ENCODE measurements at regions of chr2 and their contacts with region 1.

Region 1: GRCh38 chr2:16756831-16757644 is 91.4 kb upstream of the CYRIA start:
- DNase-seq: peak; percentile 37
- ATAC-seq: peak; percentile 96
- H3K4me3 ChIP-seq: no peak overlapping the region
- H3K27ac ChIP-seq: no peak overlapping the region
- H3K4me1 ChIP-seq: no peaks in the 10 kb centered on the region
- H3K27me3 ChIP-seq: peaks cover 17% of the 10 kb centered on the region
- CTCF ChIP-seq: peak; percentile 70 to 95 (median 84)
- POLR2A ChIP-seq: no peak
- RAD21 ChIP-seq: peak; percentile 92

Region 2: GRCh38 chr2:16553226-16553625 is 203.8 kb before region 1 on chr2:
- CTCF ChIA-PET with region 1: interaction called, 5 read pairs
- POLR2A ChIA-PET with region 1: no interaction called
- RAD21 ChIA-PET with region 1: no interaction called
- intact Hi-C with region 1: loop called (anchors 1 kb)
- DNase-seq: peak; percentile 32
- ATAC-seq: peak; percentile 60
- H3K4me3 ChIP-seq: no peak overlapping the region
- H3K27ac ChIP-seq: no peak overlapping the region
- H3K4me1 ChIP-seq: no peaks in the 10 kb centered on the region
- H3K27me3 ChIP-seq: peaks cover 5% of the 10 kb centered on the region; the same call in 1 of the 2 replicates
- CTCF ChIP-seq: peak; percentile 52 to 71 (median 66); a peak in 5 of 6 replicates
- POLR2A ChIP-seq: no peak
- RAD21 ChIP-seq: peak; percentile 43; the same call in 1 of the 2 replicates

Region 3: GRCh38 chr2:16617282-16618261 is 139.5 kb before region 1 on chr2:
- CTCF ChIA-PET with region 1: interaction called, 85 read pairs
- POLR2A ChIA-PET with region 1: interaction called, 3 read pairs
- RAD21 ChIA-PET with region 1: interaction called, 5 to 12 read pairs
- intact Hi-C with region 1: loop called (anchors 1 kb)
- DNase-seq: no peak
- ATAC-seq: peak; percentile 61; the same call in 1 of the 2 replicates
- H3K4me3 ChIP-seq: no peak overlapping the region
- H3K27ac ChIP-seq: no peak overlapping the region
- H3K4me1 ChIP-seq: no peaks in the 10 kb centered on the region
- H3K27me3 ChIP-seq: peaks cover 35% of the 10 kb centered on the region
- CTCF ChIP-seq: peak; percentile 43 to 53 (median 47); a peak in 5 of 6 replicates
- POLR2A ChIP-seq: no peak
- RAD21 ChIP-seq: peak; percentile 56

Measured in HCT116 (cell line).